ENCODE measurements at regions of chr12 and their contacts with region 1.

Region 1: DNA sequence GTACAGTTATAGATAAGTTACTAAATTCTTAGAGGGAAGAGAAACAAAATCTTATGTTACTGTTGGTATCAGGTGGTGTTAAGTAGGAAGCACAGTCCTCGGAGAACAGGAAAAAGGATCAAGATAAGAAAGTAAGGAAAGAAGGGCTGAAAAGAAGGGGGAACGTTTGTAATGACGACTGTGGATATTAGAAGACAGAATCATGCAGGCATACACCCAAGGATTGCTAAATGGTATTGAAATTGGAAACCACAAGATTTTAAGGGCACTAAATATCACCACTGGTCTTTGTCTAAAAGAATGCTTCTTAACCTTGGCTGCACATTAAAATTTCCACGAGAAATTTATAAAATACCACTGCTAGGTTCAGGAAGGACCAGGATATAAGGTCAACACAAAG is 34.1 kb upstream of the ERGIC2 start:
- DNase-seq: no peak
- H3K4me3 ChIP-seq: no peak overlapping the region
- H3K27ac ChIP-seq: no peak overlapping the region
- H3K4me1 ChIP-seq: no peaks in the 10 kb centered on the region
- H3K27me3 ChIP-seq: peaks cover 0 to 2% of the 10 kb centered on the region in 2 experiments
- CTCF ChIP-seq: no peak
- POLR2A ChIP-seq: no peak

Region 2: GRCh38 chr12:28223025-28223554 is 1192.0 kb before region 1 on chr12:
- CTCF ChIA-PET with region 1: no interaction called
- POLR2A ChIA-PET with region 1: no interaction called
- dilution Hi-C with region 1: no loop called
- intact Hi-C with region 1: loop called (anchors 5 kb)
- DNase-seq: no peak
- H3K4me3 ChIP-seq: no peak overlapping the region
- H3K27ac ChIP-seq: no peak overlapping the region
- H3K4me1 ChIP-seq: no peaks in the 10 kb centered on the region
- H3K27me3 ChIP-seq: no peaks in the 10 kb centered on the region
- CTCF ChIP-seq: no peak
- POLR2A ChIP-seq: no peak

Region 3: DNA sequence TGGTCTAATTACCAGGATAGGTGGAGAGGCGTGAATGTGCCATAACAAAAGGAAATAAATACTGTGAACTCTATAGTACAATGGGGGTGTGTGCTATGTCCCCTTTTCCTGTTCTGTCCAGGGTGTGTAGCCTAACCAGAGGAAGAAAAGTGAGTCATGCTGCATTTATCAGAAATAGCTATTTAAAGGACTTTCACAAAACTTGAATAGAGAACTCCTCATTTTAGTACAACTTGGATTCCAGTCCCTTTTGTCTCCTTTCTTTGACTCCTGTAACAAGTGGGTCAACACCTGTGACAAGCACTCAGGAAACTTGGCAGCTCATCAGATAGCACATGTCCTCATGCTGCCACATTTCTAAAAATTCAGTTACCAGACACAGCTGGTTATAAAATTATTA is 1101.5 kb before region 1 on chr12:
- CTCF ChIA-PET with region 1: no interaction called
- POLR2A ChIA-PET with region 1: no interaction called
- dilution Hi-C with region 1: no loop called
- intact Hi-C with region 1: no loop called
- DNase-seq: peak; percentile 78
- H3K4me3 ChIP-seq: peak overlapping the region in 1 of 3 experiments; percentile 11
- H3K27ac ChIP-seq: peak overlapping the region; percentile 76
- H3K4me1 ChIP-seq: peaks cover 17% of the 10 kb centered on the region
- H3K27me3 ChIP-seq: no peaks in the 10 kb centered on the region
- CTCF ChIP-seq: no peak
- POLR2A ChIP-seq: no peak

Region 4: GRCh38 chr12:28583701-28584261 is 831.3 kb before region 1 on chr12:
- CTCF ChIA-PET with region 1: no interaction called
- POLR2A ChIA-PET with region 1: no interaction called
- dilution Hi-C with region 1: no loop called
- intact Hi-C with region 1: no loop called
- DNase-seq: no peak
- H3K4me3 ChIP-seq: no peak overlapping the region
- H3K27ac ChIP-seq: no peak overlapping the region
- H3K4me1 ChIP-seq: no peaks in the 10 kb centered on the region
- H3K27me3 ChIP-seq: no peaks in the 10 kb centered on the region
- CTCF ChIP-seq: no peak
- POLR2A ChIP-seq: no peak